SK-N-SH (cell line): ENCODE measurements at regions of chr1 and their contacts with region 1.

Region 1: DNA sequence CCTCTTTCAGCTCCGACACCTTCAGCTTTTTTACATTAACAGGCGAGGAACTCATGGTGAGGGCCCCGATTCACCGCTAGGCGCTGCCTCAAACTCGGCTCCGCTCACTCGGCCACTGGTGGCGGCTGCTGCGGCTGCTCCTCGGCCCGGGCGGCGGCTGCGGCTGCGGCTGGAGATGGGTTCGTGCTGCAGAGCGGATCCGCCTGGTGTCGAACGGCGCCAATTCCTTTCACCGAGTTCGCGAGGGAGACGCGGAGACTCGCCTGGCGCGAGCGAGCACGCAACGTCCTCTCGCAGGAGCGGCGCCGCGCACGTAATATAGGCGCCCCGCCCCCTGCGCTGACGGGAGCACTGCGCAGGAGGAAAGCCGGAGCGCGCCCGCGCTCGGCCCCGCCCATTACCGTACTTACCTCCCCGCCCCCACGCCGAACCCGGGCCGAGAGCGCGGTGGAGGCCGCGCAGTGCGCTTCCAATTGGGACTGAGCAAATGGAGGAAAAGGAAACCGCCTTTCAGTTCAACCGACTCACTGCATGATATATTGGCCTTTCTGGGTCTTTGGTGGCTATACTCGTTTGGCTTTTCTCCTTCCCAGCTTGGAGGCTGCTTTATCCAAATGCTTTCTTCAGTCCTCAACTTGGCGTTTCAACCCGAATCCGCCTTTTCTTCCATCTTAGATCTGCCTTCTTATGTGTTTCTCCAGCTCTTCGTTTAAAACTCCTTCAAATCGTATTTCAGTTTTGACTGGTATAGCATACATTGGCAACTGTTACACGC is at the start of gene HNRNPU:
- DNase-seq: peak; percentile 93
- H3K4me3 ChIP-seq: peak within 1 kb of the TSS; percentile 99 to 100
- H3K27ac ChIP-seq: peak within 1 kb of the TSS; percentile 96 to 100
- H3K4me1 ChIP-seq: peaks cover 15 to 32% of the 10 kb centered on the region in 2 experiments; a peak in 3 of 4 replicates
- H3K27me3 ChIP-seq: no peaks in the 10 kb centered on the region
- CTCF ChIP-seq: peak; percentile 48
- EP300 ChIP-seq: no peak
- RAD21 ChIP-seq: no peak
- polyA plus RNA-seq, gene HNRNPU: 130 and 164 TPM in 2 replicates

Region 2: GRCh38 chr1:244835276-244836134 is 28.9 kb before region 1 on chr1 and contains the start of gene COX20:
- CTCF ChIA-PET with region 1: interaction called, 11 read pairs
- POLR2A ChIA-PET with region 1: interaction called, 33 read pairs
- DNase-seq: peak; percentile 88
- H3K4me3 ChIP-seq: peak within 1 kb of the TSS; percentile 71 to 83
- H3K27ac ChIP-seq: peak within 1 kb of the TSS; percentile 97 to 99
- H3K4me1 ChIP-seq: peaks cover 13 to 15% of the 10 kb centered on the region in 2 experiments; a peak in 3 of 4 replicates
- H3K27me3 ChIP-seq: no peaks in the 10 kb centered on the region
- CTCF ChIP-seq: no peak
- EP300 ChIP-seq: peak; percentile 20 to 38; a peak in 1 of 4 replicates
- RAD21 ChIP-seq: no peak
- polyA plus RNA-seq, gene COX20: 24.8 and 29.0 TPM in 2 replicates

Region 3: GRCh38 chr1:244970661-244971551 is 106.5 kb after region 1 on chr1:
- CTCF ChIA-PET with region 1: interaction called, 6 read pairs
- POLR2A ChIA-PET with region 1: interaction called, 47 read pairs
- DNase-seq: peak; percentile 90
- H3K4me3 ChIP-seq: peak overlapping the region; percentile 74 to 76
- H3K27ac ChIP-seq: peak overlapping the region; percentile 99 to 100
- H3K4me1 ChIP-seq: peaks cover 13 to 14% of the 10 kb centered on the region in 2 experiments; a peak in 3 of 4 replicates
- H3K27me3 ChIP-seq: no peaks in the 10 kb centered on the region
- CTCF ChIP-seq: peak; percentile 68
- EP300 ChIP-seq: peak in 1 of 2 experiments; percentile 6; a peak in 1 of 4 replicates
- RAD21 ChIP-seq: no peak; the same call in 1 of the 2 replicates